ENCODE measurements at regions of chr16 and their contacts with region 1.

Region 1: GRCh38 chr16:17467923-17468540 is 2.7 kb downstream of the XYLT1 start:
- DNase-seq: peak; percentile 72
- ATAC-seq: peak; percentile 17
- H3K4me3 Mint-ChIP-seq: peak overlapping the region; percentile 28
- H3K27ac Mint-ChIP-seq: peak overlapping the region; percentile 39
- H3K4me1 Mint-ChIP-seq: peaks cover 47% of the 10 kb centered on the region
- H3K27me3 Mint-ChIP-seq: no peaks in the 10 kb centered on the region

Region 2: GRCh38 chr16:17116595-17117296 is 351.3 kb before region 1 on chr16:
- CTCF ChIA-PET with region 1: no interaction called
- POLR2A ChIA-PET with region 1: no interaction called
- intact Hi-C with region 1: no loop called
- DNase-seq: no peak
- ATAC-seq: no peak
- H3K4me3 Mint-ChIP-seq: no peak overlapping the region
- H3K27ac Mint-ChIP-seq: no peak overlapping the region
- H3K4me1 Mint-ChIP-seq: no peaks in the 10 kb centered on the region
- H3K27me3 Mint-ChIP-seq: no peaks in the 10 kb centered on the region

Region 3: GRCh38 chr16:17194190-17194780 is 273.7 kb before region 1 on chr16:
- CTCF ChIA-PET with region 1: no interaction called
- POLR2A ChIA-PET with region 1: no interaction called
- intact Hi-C with region 1: loop called in 1 of 2 experiments (anchors 1 kb)
- DNase-seq: peak; percentile 77
- ATAC-seq: peak; percentile 47
- H3K4me3 Mint-ChIP-seq: no peak overlapping the region
- H3K27ac Mint-ChIP-seq: no peak overlapping the region
- H3K4me1 Mint-ChIP-seq: no peaks in the 10 kb centered on the region
- H3K27me3 Mint-ChIP-seq: no peaks in the 10 kb centered on the region

Region 4: DNA sequence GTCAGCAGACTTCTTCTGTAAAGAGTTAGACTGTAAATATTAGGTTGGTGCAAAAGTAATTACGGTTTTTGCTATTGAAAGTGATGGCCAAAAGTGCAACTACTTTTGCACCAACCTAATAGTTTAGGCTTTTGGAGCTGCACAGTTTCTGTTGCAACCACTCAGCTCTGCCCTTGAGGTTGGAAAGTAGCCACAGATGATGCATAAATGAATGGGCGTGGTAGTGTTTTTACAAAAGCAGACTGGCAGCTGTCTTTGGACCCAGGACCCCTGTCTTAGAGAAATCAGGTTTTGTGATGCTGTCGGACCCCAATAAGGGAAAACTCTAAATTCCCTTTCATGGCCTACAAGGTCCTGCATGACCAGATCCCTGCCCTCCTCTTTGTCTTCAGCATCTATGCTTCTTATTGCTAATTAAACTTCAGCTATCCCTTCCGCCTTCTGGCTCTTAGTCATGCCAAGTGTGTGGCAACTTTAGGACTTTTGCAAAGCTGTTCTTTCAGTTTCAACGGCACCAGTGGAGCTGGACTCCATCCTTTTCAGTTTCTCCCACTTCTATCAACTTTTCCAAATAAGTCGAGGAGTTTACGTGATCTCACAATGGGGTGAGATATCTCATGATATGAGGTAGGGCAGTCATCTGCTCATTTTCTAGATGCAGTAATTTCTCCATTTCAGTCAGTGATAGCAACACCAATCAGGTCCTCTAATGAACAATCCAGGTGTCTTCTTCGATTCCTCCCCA is 229.6 kb before region 1 on chr16:
- CTCF ChIA-PET with region 1: interaction called, 3 read pairs
- POLR2A ChIA-PET with region 1: no interaction called
- intact Hi-C with region 1: loop called in 1 of 2 experiments (anchors 10 kb)
- DNase-seq: peak; percentile 45
- ATAC-seq: peak; percentile 63
- H3K4me3 Mint-ChIP-seq: no peak overlapping the region
- H3K27ac Mint-ChIP-seq: no peak overlapping the region
- H3K4me1 Mint-ChIP-seq: peaks cover 26% of the 10 kb centered on the region
- H3K27me3 Mint-ChIP-seq: no peaks in the 10 kb centered on the region

Region 5: DNA sequence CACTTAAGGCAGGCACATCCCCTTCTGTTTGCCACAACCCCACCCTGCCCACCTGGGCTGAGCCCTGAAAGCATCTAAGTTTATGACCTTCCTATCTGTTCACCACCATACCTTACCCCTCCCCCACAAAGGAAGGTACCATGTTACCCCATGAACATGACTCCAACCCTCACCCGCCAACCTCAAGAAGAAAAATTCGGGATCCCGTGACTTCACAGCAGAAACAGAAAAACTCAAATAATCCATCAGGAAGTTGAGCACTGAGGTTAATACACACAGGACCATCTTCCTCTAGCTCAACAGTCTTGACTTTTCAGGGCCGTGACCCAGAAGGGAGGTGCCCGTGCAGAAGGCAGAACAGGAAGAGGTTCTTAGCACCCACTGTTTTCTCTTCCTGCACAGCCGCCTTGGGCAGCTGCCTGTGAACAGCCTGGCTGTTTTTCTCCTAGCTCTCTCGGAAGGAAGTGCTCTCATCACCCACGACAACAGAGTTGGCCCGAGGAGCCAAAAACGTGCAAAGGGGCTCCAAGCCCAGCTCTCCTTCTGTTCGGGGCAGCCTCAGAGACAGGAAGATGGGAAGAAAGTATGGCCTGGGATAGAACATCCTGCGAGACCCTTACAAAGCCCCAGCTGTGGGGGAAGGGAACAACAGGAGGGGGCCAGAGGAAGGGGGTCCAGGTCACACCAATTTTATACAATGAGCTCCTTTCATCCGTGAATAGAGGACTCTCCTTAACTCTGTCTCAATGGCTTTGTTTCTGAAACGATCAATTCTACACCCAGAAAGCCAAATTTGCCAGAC is 98.4 kb before region 1 on chr16:
- CTCF ChIA-PET with region 1: no interaction called
- POLR2A ChIA-PET with region 1: no interaction called
- intact Hi-C with region 1: loop called (anchors 2 to 5 kb)
- DNase-seq: peak; percentile 75
- ATAC-seq: peak; percentile 80
- H3K4me3 Mint-ChIP-seq: peak overlapping the region; percentile 85
- H3K27ac Mint-ChIP-seq: peak overlapping the region; percentile 99
- H3K4me1 Mint-ChIP-seq: peaks cover 88% of the 10 kb centered on the region
- H3K27me3 Mint-ChIP-seq: no peaks in the 10 kb centered on the region

Region 6: GRCh38 chr16:17578921-17579874 is 111.2 kb after region 1 on chr16:
- CTCF ChIA-PET with region 1: interaction called, 3 read pairs
- POLR2A ChIA-PET with region 1: no interaction called
- intact Hi-C with region 1: loop called in 1 of 2 experiments (anchors 5 kb)
- DNase-seq: peak; percentile 71
- ATAC-seq: peak; percentile 86
- H3K4me3 Mint-ChIP-seq: no peak overlapping the region
- H3K27ac Mint-ChIP-seq: no peak overlapping the region
- H3K4me1 Mint-ChIP-seq: no peaks in the 10 kb centered on the region
- H3K27me3 Mint-ChIP-seq: peaks cover 12% of the 10 kb centered on the region